Activated T-helper 2 cell treated with anti-CD3 and anti-CD28 coated beads, Interferon-gamma antibody, Interleukin-2, Interleukin-4, amounts not matched to agents 10 μg/mL and 5 μg/mL and 100 μg/mL, durations not matched to agents 14 hours and 24 hours and 36 hours (primary cell): ENCODE measurements at regions of chr20 and their contacts with region 1.

Region 1: DNA sequence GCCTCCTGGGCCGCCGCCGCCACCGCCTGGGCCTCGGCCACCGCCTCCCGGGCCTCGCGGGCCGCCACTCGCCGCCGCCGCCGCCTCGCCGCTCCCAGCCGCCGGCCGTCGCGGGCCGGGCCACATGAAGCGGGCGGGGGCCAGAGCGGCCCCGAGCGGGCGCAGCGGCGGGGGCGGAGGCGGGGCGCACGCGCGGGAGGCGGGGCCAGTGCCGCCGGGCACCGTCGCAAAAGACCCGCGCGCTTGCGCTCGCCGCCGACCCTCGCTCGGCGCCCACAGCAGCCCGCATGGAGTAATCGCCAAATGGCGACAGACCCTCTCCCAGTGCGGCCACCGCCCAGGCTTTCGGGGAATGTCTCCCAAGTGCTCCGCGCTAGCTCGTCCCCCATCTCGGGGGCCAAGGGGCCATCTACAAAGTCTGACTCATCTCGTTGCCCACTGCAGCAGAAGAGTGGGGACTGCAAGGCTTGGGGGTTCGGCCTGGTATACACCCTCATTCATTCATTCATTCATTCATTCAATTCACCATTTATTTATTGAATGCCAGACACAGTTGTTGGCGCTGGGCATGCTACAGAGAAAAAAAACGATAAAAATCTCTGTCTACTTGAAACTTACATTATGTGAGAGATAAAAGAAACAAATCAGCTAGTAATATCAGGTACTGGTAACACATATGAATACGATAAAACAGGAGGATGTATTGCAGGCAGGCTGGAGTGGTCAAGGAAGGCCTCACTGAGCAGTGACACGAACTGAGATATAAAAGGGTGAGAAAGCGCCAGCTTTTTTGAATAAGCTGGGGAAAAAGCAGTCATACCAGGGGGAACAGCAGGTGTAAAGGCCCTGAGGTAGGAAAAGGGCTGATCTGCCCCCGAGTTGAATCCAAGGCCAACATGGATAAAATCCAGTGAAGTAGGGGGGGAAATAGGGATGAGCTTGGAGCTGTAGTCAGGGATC is at the start of gene B4GALT5:
- DNase-seq: peak; percentile 67
- H3K4me3 Mint-ChIP-seq: peak within 1 kb of the TSS; percentile 88
- H3K27ac Mint-ChIP-seq: peak within 1 kb of the TSS; percentile 87
- H3K4me1 Mint-ChIP-seq: peaks cover 34% of the 10 kb centered on the region
- H3K27me3 Mint-ChIP-seq: no peaks in the 10 kb centered on the region
- total RNA-seq, gene B4GALT5: 39.4 TPM in 2 replicates

Region 2: DNA sequence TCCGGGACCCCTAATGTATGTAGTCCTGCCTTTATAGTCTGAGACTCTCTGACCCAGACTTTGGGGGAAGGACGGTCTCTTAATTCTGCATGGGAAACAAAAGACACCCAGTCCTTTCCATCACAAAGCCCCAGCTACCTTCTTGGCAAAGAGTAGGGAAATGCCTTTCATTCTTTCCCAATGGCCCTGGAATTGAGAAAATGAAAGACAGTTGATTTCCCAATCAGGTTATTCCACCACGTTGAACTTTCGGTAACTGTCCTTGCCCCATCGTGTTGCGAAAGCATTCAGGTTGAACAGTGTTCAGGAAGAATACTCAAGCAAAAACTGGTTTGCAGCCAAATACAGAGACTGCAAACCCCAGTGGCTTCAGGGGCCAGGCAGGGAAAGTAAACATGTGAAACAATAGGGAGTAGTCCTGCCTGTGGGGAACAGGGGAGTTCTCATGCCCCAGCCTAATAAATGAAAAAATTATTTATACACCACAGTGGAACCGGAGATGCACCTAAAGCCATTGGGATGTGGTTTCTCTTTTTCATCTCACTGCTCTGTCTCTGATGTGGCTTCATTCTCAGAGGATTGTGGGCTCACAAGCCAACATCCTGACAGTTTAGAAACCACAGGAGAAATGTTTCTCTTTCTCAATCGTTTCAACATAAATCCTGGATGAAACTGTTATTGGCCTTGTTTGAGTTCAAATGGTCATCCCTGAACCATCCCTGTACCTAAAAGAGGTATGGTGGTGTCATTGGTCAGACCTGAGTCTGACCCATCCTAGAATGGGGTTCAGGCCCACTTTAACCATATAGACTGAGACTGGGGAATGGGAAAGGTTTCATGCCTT is 54.4 kb after region 1 on chr20:
- intact Hi-C with region 1: loop called (anchors 5 kb)
- DNase-seq: peak; percentile 36
- H3K4me3 Mint-ChIP-seq: peak overlapping the region; percentile 30
- H3K27ac Mint-ChIP-seq: no peak overlapping the region
- H3K4me1 Mint-ChIP-seq: peaks cover 39% of the 10 kb centered on the region
- H3K27me3 Mint-ChIP-seq: peaks cover 20% of the 10 kb centered on the region

Region 3: DNA sequence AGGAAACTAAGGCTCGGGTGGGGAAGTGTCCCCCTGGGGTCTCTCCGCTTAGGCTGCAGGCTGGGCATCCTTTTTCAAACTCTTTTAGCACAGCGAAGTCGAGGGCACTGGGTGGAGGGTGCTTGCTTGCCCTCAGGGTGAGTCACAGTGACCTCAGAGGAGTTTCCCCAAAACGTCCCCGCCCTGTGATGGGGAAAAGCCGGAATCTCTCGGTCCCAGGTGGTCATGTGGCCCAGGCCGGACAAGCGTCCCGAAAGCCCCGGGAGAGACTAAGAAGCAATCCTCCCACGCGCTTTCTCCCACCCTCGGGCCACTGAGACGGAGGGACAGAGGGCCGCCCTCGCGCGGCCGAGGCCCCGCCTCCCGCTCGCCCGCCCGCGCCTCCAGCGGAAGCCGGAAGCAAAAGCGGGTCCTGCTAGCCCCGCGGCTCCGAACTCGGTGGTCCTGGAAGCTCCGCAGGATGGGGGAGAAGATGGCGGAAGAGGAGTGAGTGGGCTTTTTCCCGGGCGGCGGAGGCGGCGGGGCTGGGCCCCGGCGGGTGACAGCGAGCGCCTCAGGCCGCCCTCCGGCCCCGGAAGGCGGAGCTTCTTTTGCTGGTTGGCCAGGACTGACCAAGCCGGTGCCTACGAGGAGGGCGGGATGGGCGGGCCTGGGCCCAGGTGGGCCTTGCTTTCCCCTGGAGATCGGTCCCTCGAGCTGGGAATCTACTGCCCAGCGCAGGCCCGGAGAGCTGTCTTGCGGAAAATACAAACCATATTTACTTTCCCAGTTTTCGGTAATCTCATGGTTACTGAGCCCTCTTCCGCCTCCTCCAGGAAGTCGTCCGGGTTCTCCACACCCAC is 98.7 kb after region 1 on chr20 and contains the start of gene SLC9A8:
- intact Hi-C with region 1: loop called (anchors 5 kb)
- DNase-seq: peak; percentile 75
- H3K4me3 Mint-ChIP-seq: peak within 1 kb of the TSS; percentile 92
- H3K27ac Mint-ChIP-seq: peak within 1 kb of the TSS; percentile 94
- H3K4me1 Mint-ChIP-seq: peaks cover 43% of the 10 kb centered on the region
- H3K27me3 Mint-ChIP-seq: no peaks in the 10 kb centered on the region
- total RNA-seq, gene SLC9A8: 16.4 and 18.7 TPM in 2 replicates